GM10248 (cell line): ENCODE measurements at regions of chr16 and their contacts with region 1.

Region 1: GRCh38 chr16:46918861-46919792 is 35.0 kb downstream of the GPT2 start:
- DNase-seq: peak; percentile 86
- CTCF ChIP-seq: peak; percentile 49

Region 2: DNA sequence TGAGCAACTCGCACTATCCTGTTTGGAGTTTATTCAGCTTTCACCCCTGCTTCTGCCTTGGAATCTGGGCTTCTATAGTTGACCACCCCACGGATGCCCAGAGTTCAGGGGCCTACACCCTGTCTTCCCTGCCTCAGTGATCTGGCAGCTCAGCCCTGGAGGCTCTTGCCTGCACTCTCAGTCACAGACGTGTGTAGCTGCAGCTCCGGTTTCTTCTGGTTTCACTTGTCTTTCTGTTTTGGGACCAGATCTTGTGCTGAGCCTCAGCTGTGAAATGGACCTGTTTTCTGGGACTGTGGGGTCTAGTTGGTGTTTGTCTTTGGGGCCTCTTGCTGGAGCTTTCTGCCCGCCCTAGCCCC is 29.2 kb before region 1 on chr16:
- CTCF ChIA-PET with region 1: interaction called, 11 read pairs
- POLR2A ChIA-PET with region 1: no interaction called
- DNase-seq: no peak
- CTCF ChIP-seq: no peak

Region 3: GRCh38 chr16:46908540-46909372 is 10.4 kb before region 1 on chr16:
- CTCF ChIA-PET with region 1: interaction called, 59 read pairs
- POLR2A ChIA-PET with region 1: no interaction called
- DNase-seq: peak; percentile 66
- CTCF ChIP-seq: peak; percentile 63

Region 4: DNA sequence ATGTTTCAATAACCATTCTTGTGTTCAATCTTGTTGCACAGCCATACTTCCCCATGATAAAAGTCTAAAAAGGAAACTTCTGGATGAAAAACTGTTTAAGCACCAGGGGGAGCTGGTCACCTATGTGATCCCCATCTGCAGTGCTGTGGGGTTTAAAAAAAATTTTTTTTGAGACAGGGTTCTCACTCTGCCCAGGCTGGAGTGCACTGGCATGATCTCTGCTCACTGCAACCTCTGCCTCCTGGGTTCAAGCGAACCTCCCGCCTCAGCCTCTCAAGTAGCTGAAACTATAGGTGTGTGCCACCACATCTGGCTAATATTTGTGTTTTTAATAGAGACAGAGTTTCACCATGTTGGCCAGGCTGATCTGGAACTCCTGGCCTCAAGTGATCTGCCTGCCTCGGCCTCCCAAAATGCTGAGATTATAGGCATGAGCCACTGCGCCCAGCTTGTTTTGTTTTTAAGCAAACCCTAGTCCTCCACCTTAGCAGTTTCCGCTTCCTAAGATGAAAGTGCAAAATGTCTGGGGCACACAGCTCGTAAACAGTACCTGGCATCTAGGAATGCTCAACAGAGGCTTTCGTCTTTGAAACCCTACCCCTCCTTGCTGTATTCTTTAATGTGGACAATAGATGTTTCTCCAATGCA is 28.9 kb after region 1 on chr16:
- CTCF ChIA-PET with region 1: interaction called, 12 read pairs
- POLR2A ChIA-PET with region 1: no interaction called
- DNase-seq: peak; percentile 64
- CTCF ChIP-seq: peak; percentile 37

Region 5: GRCh38 chr16:47895146-47895545 is 976.0 kb after region 1 on chr16:
- CTCF ChIA-PET with region 1: no interaction called
- POLR2A ChIA-PET with region 1: no interaction called
- DNase-seq: no peak
- CTCF ChIP-seq: no peak